ENCODE measurements at regions of chr19 and their contacts with region 1.

Region 1: DNA sequence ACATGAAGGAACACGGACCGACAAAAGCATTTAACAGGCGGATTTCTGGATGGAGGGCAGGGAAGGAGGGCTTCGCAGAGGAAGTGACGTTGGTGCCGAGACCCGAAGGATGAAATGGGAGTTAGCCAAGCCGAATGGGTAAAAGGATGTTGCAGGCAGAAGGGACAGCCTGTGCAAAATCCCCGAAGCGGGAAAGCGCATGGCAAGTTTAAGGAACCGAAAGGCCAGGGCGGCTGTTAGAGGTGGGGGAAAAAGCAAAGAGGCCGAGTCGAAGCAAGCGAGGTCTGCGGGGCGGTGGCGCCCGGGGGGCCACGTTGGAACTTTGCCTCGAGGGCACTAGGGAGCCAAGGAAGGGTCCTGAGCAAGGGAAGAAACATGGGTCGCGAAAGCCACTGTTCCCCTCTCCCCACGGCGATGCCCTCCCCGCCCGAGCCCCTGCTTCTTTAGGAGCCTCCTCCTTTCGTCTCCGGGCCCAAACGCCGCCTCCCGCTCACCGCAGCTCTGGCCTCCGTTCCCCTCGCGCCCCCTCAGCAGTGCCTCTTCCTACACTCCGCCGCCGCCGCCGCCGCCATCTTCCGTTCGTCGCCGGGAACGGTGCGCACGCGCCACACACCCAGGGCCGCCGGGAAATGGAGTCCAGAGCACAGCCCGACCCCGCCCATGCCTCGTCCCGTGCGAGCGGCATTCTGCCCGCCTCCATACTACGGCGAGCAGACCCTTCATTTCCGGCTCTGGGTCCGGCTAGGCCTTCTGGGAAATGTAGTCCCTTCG is at the start of gene SYMPK:
- DNase-seq: peak; percentile 99
- H3K4me3 ChIP-seq: peak within 1 kb of the TSS; percentile 94 to 99 (median 96)
- H3K27ac ChIP-seq: peak within 1 kb of the TSS; percentile 92 to 97 (median 96)
- H3K4me1 ChIP-seq: peaks cover 0 to 33% (median 24%) of the 10 kb centered on the region in 4 donors
- H3K27me3 ChIP-seq: peaks cover 8 to 32% (median 24%) of the 10 kb centered on the region in 3 donors
- CTCF ChIP-seq: no peak
- EP300 ChIP-seq: peak in 1 of 4 donors; percentile 70
- POLR2A ChIP-seq: peak; percentile 56 to 61
- total RNA-seq, gene SYMPK: 18.2 to 31.3 (median 25.3) TPM

Region 2: GRCh38 chr19:45739498-45740439 is 123.0 kb before region 1 on chr19:
- intact Hi-C with region 1: no loop called
- DNase-seq: no peak
- H3K4me3 ChIP-seq: no peak overlapping the region
- H3K27ac ChIP-seq: no peak overlapping the region
- H3K4me1 ChIP-seq: no peaks in the 10 kb centered on the region
- H3K27me3 ChIP-seq: no peaks in the 10 kb centered on the region
- CTCF ChIP-seq: no peak
- EP300 ChIP-seq: no peak
- POLR2A ChIP-seq: no peak

Region 3: GRCh38 chr19:46016426-46017094 is 153.8 kb after region 1 on chr19:
- intact Hi-C with region 1: loop called (anchors 5 kb)
- DNase-seq: peak; percentile 87
- H3K4me3 ChIP-seq: peak overlapping the region; percentile 39 to 62 (median 62)
- H3K27ac ChIP-seq: no peak overlapping the region
- H3K4me1 ChIP-seq: peaks cover 0 to 26% (median 22%) of the 10 kb centered on the region in 4 donors
- H3K27me3 ChIP-seq: peaks cover 23 to 52% (median 49%) of the 10 kb centered on the region in 3 donors
- CTCF ChIP-seq: peak in 2 of 4 experiments; percentile 45 to 83
- EP300 ChIP-seq: no peak
- POLR2A ChIP-seq: no peak